ENCODE measurements at regions of chr10 and their contacts with region 1.

Region 1: DNA sequence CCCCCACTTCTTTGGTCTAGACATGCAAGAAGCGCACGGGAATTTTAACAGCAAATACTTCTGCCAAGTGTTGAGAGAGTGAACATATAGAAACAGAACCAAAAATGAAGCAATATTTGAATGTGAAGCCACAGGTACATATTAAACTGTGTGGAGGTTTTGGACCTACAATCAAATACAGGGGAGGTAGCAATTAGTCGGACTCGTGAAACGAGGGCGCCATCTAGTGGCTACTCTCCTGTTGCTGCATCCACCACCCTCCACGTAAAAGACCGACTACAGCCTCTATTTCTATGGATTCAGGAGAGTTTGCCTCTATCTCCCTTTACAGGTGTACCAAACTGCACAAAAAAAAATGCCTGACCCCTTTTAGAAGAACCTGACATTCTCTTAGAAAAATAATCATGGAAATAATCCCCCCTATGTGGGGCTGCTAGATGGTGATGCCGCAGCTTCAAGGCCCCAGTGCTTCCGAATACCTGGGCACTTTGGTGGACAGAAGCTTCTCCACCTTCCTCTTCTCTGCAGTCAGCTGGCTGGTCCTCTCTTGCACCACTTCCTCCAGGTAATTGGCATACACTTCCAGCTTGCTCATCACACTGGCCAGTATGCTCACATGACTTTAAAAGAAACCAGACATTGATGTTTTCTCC is 31.7 kb downstream of the TECTB start:
- DNase-seq: peak; percentile 62 to 64 (median 64)
- H3K4me3 ChIP-seq: no peak overlapping the region
- H3K4me3 Mint-ChIP-seq: no peak overlapping the region
- H3K27ac ChIP-seq: no peak overlapping the region
- H3K27ac Mint-ChIP-seq: no peak overlapping the region
- H3K4me1 ChIP-seq: no peaks in the 10 kb centered on the region
- H3K4me1 Mint-ChIP-seq: peaks cover 0 to 3% (median 0%) of the 10 kb centered on the region in 4 donors
- H3K27me3 ChIP-seq: no peaks in the 10 kb centered on the region
- H3K27me3 Mint-ChIP-seq: peaks cover 12 to 34% of the 10 kb centered on the region in 2 donors

Region 2: DNA sequence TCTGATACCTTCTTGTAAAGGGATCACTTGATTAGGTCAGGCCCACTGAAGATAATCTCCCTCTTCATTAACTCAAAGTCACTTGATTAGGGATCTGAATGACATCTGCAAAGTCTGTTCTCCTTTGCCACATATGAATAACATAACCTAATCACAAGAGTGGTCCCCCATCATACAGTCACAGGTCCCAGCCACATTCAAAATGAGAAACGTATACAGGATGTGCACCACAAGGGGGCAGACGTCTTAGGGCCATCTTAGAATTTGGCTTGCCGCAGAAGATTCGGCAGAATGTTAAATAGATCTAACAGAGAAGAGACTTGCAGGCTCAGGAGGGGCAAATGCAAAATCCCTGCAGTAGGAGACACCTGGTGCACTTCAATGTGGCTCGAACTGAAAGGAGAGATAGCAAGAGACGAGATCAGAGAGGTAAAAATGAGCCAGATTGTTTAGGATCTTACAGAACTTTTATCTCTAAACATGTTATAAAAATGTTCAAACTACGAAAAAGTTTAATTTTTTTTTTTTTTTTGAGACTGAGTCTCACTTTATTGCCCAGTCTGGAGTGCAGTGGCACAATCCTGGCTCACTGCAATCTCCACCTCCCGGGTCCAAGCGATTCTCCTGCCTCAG is 1757.9 kb before region 1 on chr10:
- CTCF ChIA-PET with region 1: no interaction called
- POLR2A ChIA-PET with region 1: no interaction called
- intact Hi-C with region 1: loop called (anchors 2 kb)
- DNase-seq: peak; percentile 45 to 73 (median 62)
- H3K4me3 ChIP-seq: no peak overlapping the region
- H3K4me3 Mint-ChIP-seq: peak overlapping the region in 1 of 8 donors; percentile 51
- H3K27ac ChIP-seq: no peak overlapping the region
- H3K27ac Mint-ChIP-seq: peak overlapping the region in 1 of 7 donors; percentile 61
- H3K4me1 ChIP-seq: peaks cover 4% of the 10 kb centered on the region
- H3K4me1 Mint-ChIP-seq: peaks cover 3 to 6% (median 4%) of the 10 kb centered on the region in 4 donors
- H3K27me3 ChIP-seq: no peaks in the 10 kb centered on the region
- H3K27me3 Mint-ChIP-seq: peaks cover 4 to 9% of the 10 kb centered on the region in 2 donors

Region 3: DNA sequence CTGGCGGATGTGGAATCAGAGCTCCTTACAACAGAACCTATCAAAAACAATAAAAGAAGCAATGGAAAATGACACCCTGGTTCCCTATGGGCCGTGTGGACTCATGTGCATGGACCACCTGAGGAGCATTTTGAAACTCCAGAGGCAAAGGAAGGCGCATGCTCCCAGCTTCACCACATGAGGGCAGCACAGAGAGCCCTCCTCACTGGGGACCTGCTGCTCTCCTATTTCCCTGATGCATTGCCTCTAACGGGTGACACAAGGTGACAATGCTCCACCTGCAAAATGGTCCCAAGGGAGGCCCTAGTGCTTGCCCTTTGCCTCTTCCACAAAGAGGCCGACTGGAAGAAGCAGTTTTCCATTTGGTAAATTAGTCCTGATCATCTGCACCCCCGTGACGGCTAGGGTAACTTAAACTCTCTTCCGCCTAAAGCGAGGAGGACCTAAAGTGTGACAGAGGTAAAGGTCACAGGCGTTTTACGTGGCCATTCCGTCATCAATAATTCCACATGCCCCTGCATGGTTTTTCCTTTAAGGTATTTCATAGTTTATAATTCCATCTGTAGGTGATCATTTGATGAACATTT is 199.1 kb before region 1 on chr10:
- CTCF ChIA-PET with region 1: interaction called, 3 read pairs
- POLR2A ChIA-PET with region 1: no interaction called
- intact Hi-C with region 1: loop called (anchors 10 kb)
- DNase-seq: peak in 4 of 5 donors; percentile 11 to 23 (median 20)
- H3K4me3 ChIP-seq: no peak overlapping the region
- H3K4me3 Mint-ChIP-seq: no peak overlapping the region
- H3K27ac ChIP-seq: no peak overlapping the region
- H3K27ac Mint-ChIP-seq: no peak overlapping the region
- H3K4me1 ChIP-seq: no peaks in the 10 kb centered on the region
- H3K4me1 Mint-ChIP-seq: no peaks in the 10 kb centered on the region
- H3K27me3 ChIP-seq: no peaks in the 10 kb centered on the region
- H3K27me3 Mint-ChIP-seq: peaks cover 0 to 6% of the 10 kb centered on the region in 2 donors

Region 4: GRCh38 chr10:112330162-112330561 is 15.2 kb after region 1 on chr10:
- CTCF ChIA-PET with region 1: interaction called, 27 read pairs
- POLR2A ChIA-PET with region 1: no interaction called
- intact Hi-C with region 1: no loop called
- DNase-seq: no peak
- H3K4me3 ChIP-seq: no peak overlapping the region
- H3K4me3 Mint-ChIP-seq: no peak overlapping the region
- H3K27ac ChIP-seq: no peak overlapping the region
- H3K27ac Mint-ChIP-seq: no peak overlapping the region
- H3K4me1 ChIP-seq: no peaks in the 10 kb centered on the region
- H3K4me1 Mint-ChIP-seq: no peaks in the 10 kb centered on the region
- H3K27me3 ChIP-seq: no peaks in the 10 kb centered on the region
- H3K27me3 Mint-ChIP-seq: peaks cover 6 to 9% of the 10 kb centered on the region in 2 donors

Region 5: GRCh38 chr10:112335111-112335867 is 20.3 kb after region 1 on chr10:
- CTCF ChIA-PET with region 1: interaction called, 27 read pairs
- POLR2A ChIA-PET with region 1: no interaction called
- intact Hi-C with region 1: no loop called
- DNase-seq: no peak
- H3K4me3 ChIP-seq: no peak overlapping the region
- H3K4me3 Mint-ChIP-seq: no peak overlapping the region
- H3K27ac ChIP-seq: no peak overlapping the region
- H3K27ac Mint-ChIP-seq: no peak overlapping the region
- H3K4me1 ChIP-seq: no peaks in the 10 kb centered on the region
- H3K4me1 Mint-ChIP-seq: peaks cover 0 to 5% (median 4%) of the 10 kb centered on the region in 4 donors
- H3K27me3 ChIP-seq: no peaks in the 10 kb centered on the region
- H3K27me3 Mint-ChIP-seq: no peaks in the 10 kb centered on the region

Region 6: GRCh38 chr10:112434988-112435619 is 120.2 kb after region 1 on chr10:
- CTCF ChIA-PET with region 1: interaction called, 25 read pairs
- POLR2A ChIA-PET with region 1: no interaction called
- intact Hi-C with region 1: loop called (anchors 1 kb)
- DNase-seq: peak in 3 of 5 donors; percentile 13 to 28 (median 17)
- H3K4me3 ChIP-seq: no peak overlapping the region
- H3K4me3 Mint-ChIP-seq: no peak overlapping the region
- H3K27ac ChIP-seq: no peak overlapping the region
- H3K27ac Mint-ChIP-seq: peak overlapping the region in 1 of 7 donors; percentile 73
- H3K4me1 ChIP-seq: no peaks in the 10 kb centered on the region
- H3K4me1 Mint-ChIP-seq: peaks cover 0 to 3% (median 0%) of the 10 kb centered on the region in 4 donors
- H3K27me3 ChIP-seq: no peaks in the 10 kb centered on the region
- H3K27me3 Mint-ChIP-seq: no peaks in the 10 kb centered on the region

Measured in CD4-positive, alpha-beta memory T cell (primary cell).